ENCODE measurements at regions of chr1 and their contacts with region 1.

Region 1: GRCh38 chr1:211133836-211134669 is at the start of gene KCNH1:
- DNase-seq: peak; percentile 46
- ATAC-seq: peak; percentile 91
- H3K4me3 ChIP-seq: no peak within 1 kb of the TSS
- H3K27ac ChIP-seq: no peak within 1 kb of the TSS
- H3K4me1 ChIP-seq: peaks cover 0 to 4% of the 10 kb centered on the region in 2 experiments; a peak in 2 of 4 replicates
- H3K27me3 ChIP-seq: peaks cover 66% of the 10 kb centered on the region
- CTCF ChIP-seq: peak; percentile 78 to 97 (median 90)
- POLR2A ChIP-seq: no peak
- RAD21 ChIP-seq: peak; percentile 94
- total RNA-seq, gene KCNH1: not detected

Region 2: GRCh38 chr1:210407207-210407886 is 726.7 kb before region 1 on chr1:
- CTCF ChIA-PET with region 1: interaction called, 40 read pairs
- POLR2A ChIA-PET with region 1: no interaction called
- RAD21 ChIA-PET with region 1: interaction called in 1 of 2 experiments, 4 read pairs
- intact Hi-C with region 1: loop called (anchors 1 kb)
- DNase-seq: peak; percentile 27
- ATAC-seq: peak; percentile 92
- H3K4me3 ChIP-seq: no peak overlapping the region
- H3K27ac ChIP-seq: no peak overlapping the region
- H3K4me1 ChIP-seq: no peaks in the 10 kb centered on the region
- H3K27me3 ChIP-seq: no peaks in the 10 kb centered on the region
- CTCF ChIP-seq: peak; percentile 73 to 97 (median 88)
- POLR2A ChIP-seq: no peak
- RAD21 ChIP-seq: peak; percentile 91

Region 3: GRCh38 chr1:210448297-210448892 is 685.7 kb before region 1 on chr1:
- CTCF ChIA-PET with region 1: interaction called, 46 read pairs
- POLR2A ChIA-PET with region 1: no interaction called
- RAD21 ChIA-PET with region 1: interaction called, 3 to 6 read pairs
- intact Hi-C with region 1: loop called (anchors 1 kb)
- DNase-seq: peak; percentile 33
- ATAC-seq: peak; percentile 87
- H3K4me3 ChIP-seq: no peak overlapping the region
- H3K27ac ChIP-seq: no peak overlapping the region
- H3K4me1 ChIP-seq: peaks cover 4% of the 10 kb centered on the region in 2 experiments; a peak in 2 of 4 replicates
- H3K27me3 ChIP-seq: peaks cover 34% of the 10 kb centered on the region
- CTCF ChIP-seq: peak; percentile 56 to 73 (median 59); a peak in 5 of 6 replicates
- POLR2A ChIP-seq: no peak
- RAD21 ChIP-seq: peak; percentile 79

Region 4: GRCh38 chr1:210711825-210712612 is 422.0 kb before region 1 on chr1:
- CTCF ChIA-PET with region 1: interaction called, 3 read pairs
- POLR2A ChIA-PET with region 1: no interaction called
- RAD21 ChIA-PET with region 1: no interaction called
- intact Hi-C with region 1: loop called (anchors 1 kb)
- DNase-seq: no peak
- ATAC-seq: peak; percentile 68
- H3K4me3 ChIP-seq: no peak overlapping the region
- H3K27ac ChIP-seq: no peak overlapping the region
- H3K4me1 ChIP-seq: no peaks in the 10 kb centered on the region
- H3K27me3 ChIP-seq: peaks cover 28% of the 10 kb centered on the region; the same call in 1 of the 2 replicates
- CTCF ChIP-seq: peak; percentile 14 to 37 (median 34); a peak in 3 of 6 replicates
- POLR2A ChIP-seq: no peak
- RAD21 ChIP-seq: peak; percentile 49

Region 5: DNA sequence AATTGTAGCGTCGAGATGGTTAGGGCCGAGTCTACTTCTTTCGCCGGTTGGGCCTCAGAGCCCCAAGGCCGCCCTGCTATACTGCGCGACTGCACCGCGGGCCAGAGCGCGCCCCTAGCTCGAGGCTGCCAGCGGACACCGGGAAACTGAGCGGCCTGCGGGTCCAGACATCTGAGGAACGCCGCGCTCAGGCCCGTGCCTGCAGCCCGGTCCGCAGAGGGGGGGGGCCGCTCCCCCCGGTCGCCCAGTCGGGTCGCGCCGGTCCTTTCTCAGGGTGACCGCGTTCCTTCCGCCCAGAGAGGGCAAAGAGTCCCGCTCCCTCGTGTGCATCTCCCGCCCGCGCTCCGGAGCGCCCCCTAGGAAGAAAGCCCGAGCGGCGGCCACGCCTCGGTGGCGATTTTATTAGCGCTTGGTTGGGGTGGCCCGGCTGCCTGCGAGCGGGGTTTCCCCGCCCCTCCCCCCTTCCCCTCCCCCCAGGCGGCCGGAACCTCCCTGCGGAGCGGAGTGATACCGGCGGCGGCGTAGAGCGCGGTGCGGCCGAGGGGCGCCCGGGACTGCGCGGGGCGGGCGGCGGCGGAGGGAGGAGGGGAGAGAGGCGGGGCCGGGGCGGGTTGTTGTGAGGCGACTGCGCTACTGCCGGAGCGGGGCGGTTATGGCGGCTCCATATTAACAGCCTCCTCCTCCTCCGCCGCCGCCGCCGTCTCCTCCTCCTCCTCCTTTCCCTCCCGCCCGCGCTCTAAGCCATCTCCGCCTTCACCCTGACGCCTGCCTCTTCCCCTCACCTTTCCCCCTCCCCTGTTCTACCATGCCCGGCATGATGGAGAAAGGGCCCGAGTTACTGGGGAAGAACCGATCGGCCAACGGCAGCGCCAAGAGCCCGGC is 124.9 kb after region 1 on chr1 and contains the start of gene RCOR3:
- CTCF ChIA-PET with region 1: no interaction called
- POLR2A ChIA-PET with region 1: interaction called, 3 read pairs
- RAD21 ChIA-PET with region 1: no interaction called
- intact Hi-C with region 1: loop called (anchors 5 kb)
- DNase-seq: peak; percentile 72
- ATAC-seq: peak; percentile 81
- H3K4me3 ChIP-seq: peak within 1 kb of the TSS; percentile 72 to 91
- H3K27ac ChIP-seq: peak within 1 kb of the TSS; percentile 96
- H3K4me1 ChIP-seq: peaks cover 14 to 21% of the 10 kb centered on the region in 2 experiments
- H3K27me3 ChIP-seq: no peaks in the 10 kb centered on the region
- CTCF ChIP-seq: peak; percentile 33 to 51 (median 49); a peak in 5 of 6 replicates
- POLR2A ChIP-seq: peak; percentile 12
- RAD21 ChIP-seq: 0 out of 2 replicates have a peak, but pooled peaks have one; percentile 10
- total RNA-seq, gene RCOR3: 25.7 TPM